Mucosa of descending colon (tissue), 3 donors: ENCODE measurements at regions of chr3 and their contacts with region 1.

Region 1: GRCh38 chr3:107429320-107430181 is 52.3 kb downstream of the CCDC54 start:
- DNase-seq: peak; percentile 66 to 74 (median 72)
- ATAC-seq: peak; percentile 80
- H3K4me3 ChIP-seq: no peak overlapping the region
- H3K4me1 ChIP-seq: peaks cover 12% of the 10 kb centered on the region
- CTCF ChIP-seq: peak; percentile 80

Region 2: GRCh38 chr3:107240183-107241091 is 189.1 kb before region 1 on chr3:
- intact Hi-C with region 1: loop called in 1 of 2 experiments (anchors 10 kb)
- DNase-seq: peak; percentile 70 to 80 (median 77)
- ATAC-seq: peak; percentile 95
- H3K4me3 ChIP-seq: peak overlapping the region; percentile 21
- H3K4me1 ChIP-seq: no peaks in the 10 kb centered on the region
- CTCF ChIP-seq: no peak

Region 3: DNA sequence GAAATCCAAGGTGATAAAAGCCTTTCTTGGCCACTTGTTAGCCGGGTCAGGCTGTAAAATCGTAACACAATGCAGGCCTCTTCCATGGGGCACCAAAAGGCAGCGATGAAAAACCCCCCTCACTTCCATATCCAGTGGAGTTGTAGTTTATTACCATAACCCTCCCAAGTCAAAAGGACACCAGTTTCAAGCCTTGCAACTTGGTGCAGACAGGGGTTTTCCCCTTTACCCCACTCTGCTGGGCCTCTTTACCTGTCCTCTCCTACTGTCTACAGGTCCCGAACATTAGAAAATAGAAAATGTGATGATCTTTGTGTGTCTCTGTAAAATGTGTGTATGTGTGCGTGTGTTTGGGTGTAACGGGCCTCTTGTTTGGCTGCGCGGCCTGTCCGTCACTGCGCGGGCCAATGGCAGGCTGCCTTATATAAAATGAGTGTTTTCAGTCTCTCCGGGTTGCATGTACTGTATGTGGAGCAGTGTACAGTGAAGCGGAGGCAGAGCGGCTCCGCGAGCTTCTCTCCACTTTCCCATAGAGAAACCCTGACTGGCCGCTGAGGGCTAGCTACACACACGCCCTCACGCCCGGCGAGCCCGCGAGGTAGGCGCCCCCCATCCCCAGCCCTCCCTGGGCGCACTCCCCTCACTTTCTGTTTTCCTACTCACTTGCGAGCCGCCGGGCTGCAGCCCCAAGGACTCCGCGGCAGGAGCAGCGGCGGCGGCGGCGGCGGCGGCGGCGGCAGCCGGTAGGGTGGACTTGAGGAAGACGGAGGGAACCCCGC is 93.1 kb after region 1 on chr3 and contains the start of gene BBX:
- intact Hi-C with region 1: loop called in 1 of 2 experiments (anchors 10 kb)
- DNase-seq: peak; percentile 93 to 98 (median 96)
- ATAC-seq: peak; percentile 94
- H3K4me3 ChIP-seq: peak within 1 kb of the TSS; percentile 70
- H3K4me1 ChIP-seq: peaks cover 6% of the 10 kb centered on the region
- CTCF ChIP-seq: no peak
- total RNA-seq, gene BBX: 24.4 to 69.9 (median 26.0) TPM

Region 4: DNA sequence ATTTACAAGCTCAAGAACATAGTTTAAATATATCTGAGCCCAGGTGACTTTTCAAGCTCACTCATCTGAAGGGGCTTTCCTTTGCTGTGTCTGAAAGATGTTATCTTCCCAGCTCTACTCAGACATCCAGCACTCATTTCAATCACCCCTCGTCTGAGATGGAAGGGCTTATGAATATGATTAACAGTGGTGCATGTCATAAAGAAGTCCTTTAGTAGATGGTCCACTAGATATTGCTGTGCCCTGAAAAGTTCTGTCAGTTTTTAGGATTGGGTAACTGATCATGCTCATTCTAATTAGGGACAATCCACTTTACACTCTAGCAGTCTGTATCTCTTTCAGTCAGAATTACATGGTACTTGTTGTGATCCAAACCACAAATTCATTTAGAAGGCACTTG is 1299.4 kb after region 1 on chr3:
- intact Hi-C with region 1: no loop called
- DNase-seq: no peak
- ATAC-seq: no peak
- H3K4me3 ChIP-seq: no peak overlapping the region
- H3K4me1 ChIP-seq: no peaks in the 10 kb centered on the region
- CTCF ChIP-seq: no peak